ENCODE measurements at regions of chr17 and their contacts with region 1.

Region 1: DNA sequence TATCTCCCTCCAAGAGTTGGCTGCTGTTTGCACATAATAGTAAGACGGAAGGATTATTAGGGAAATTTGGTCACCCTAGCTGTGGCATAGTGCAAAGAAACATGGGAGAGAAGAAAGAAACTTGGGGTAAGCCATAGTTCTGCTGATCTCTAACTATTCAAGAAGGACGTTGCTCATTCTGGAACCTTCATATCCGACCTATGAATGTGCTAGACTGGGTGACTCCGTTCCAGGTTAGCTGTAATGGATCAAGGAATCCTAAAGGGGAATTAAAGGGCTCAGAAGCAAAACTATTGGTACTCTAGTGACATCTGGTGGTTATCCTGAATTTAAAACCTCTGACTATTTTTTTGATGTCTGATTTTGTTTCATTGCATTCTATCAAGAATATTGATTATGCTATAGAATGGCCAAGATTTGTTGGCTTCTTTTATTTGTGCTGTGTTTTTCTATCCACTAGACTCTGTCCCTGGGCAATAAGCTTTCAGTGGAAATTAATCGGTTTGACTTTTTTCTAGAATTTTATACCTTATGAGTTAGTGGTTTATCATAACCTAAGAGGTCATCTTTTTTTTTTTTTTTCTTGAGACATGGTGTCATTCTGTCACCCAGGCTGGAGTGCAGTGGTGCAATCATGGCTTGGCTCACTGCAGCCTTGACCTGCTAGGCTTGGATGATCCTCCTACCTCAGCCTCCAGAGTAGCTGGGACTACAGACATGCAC is 19.5 kb downstream of the PCTP start:
- DNase-seq: peak; percentile 4
- H3K4me3 ChIP-seq: no peak overlapping the region
- CTCF ChIP-seq: peak; percentile 23

Region 2: GRCh38 chr17:55641676-55642081 is 128.6 kb before region 1 on chr17:
- CTCF ChIA-PET with region 1: interaction called, 13 read pairs
- POLR2A ChIA-PET with region 1: no interaction called
- DNase-seq: peak; percentile 12
- H3K4me3 ChIP-seq: no peak overlapping the region
- CTCF ChIP-seq: peak; percentile 62

Region 3: GRCh38 chr17:55693254-55694216 is 76.8 kb before region 1 on chr17:
- CTCF ChIA-PET with region 1: no interaction called
- POLR2A ChIA-PET with region 1: no interaction called
- DNase-seq: no peak
- H3K4me3 ChIP-seq: no peak overlapping the region
- CTCF ChIP-seq: no peak

Region 4: GRCh38 chr17:55735731-55736405 is 34.4 kb before region 1 on chr17:
- CTCF ChIA-PET with region 1: interaction called, 12 read pairs
- POLR2A ChIA-PET with region 1: no interaction called
- DNase-seq: no peak
- H3K4me3 ChIP-seq: no peak overlapping the region
- CTCF ChIP-seq: peak; percentile 54

Region 5: DNA sequence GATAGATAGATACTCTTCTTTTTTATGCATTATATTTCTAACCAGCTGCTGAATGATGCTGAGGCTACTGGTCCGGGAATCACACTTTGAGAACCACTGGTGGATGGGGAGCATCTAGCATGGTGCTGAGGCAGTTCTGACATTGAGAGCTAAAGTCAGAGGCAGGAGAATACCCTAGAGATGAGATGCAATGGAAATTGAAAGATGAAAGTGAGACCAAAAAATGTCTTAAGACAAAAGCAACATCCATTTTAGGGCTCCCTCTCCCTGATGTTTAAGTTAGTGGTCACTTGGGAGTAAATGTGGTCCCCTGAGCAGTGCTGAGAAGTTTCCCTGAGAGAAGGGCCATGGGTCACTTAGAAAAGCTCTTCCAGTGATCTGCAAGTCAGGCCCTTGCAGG is 12.7 kb before region 1 on chr17:
- CTCF ChIA-PET with region 1: interaction called, 22 read pairs
- POLR2A ChIA-PET with region 1: no interaction called
- DNase-seq: no peak
- H3K4me3 ChIP-seq: no peak overlapping the region
- CTCF ChIP-seq: no peak

Region 6: GRCh38 chr17:55806745-55807495 is 36.6 kb after region 1 on chr17:
- CTCF ChIA-PET with region 1: no interaction called
- POLR2A ChIA-PET with region 1: no interaction called
- DNase-seq: no peak
- H3K4me3 ChIP-seq: no peak overlapping the region
- CTCF ChIP-seq: no peak

Region 7: DNA sequence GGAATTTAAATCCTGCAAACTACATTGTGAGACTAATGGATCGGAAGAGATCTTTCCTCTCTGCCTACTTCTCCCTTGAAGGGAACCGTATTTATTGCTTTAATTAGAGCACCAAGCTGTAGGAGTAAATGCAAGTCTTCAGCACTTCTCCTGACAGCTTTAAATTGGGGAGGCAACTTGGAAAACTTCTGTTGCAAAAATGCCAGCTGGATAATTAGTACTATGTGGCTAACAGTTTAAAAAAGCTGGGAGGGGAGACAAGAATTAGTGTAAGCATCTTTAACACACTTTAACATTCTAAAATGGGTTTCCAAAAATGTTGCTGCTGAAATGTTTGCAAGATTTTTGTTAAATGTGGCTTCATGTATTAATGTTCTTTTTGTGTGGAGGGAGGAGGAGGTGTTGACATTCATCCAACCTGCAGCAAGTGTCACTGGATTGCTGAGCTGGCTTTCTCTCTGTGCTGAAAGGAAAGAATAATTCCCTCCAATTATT is 89.0 kb after region 1 on chr17:
- CTCF ChIA-PET with region 1: no interaction called
- POLR2A ChIA-PET with region 1: no interaction called
- DNase-seq: no peak
- H3K4me3 ChIP-seq: no peak overlapping the region
- CTCF ChIP-seq: no peak